ENCODE measurements at regions of chr14 and their contacts with region 1.

Region 1: DNA sequence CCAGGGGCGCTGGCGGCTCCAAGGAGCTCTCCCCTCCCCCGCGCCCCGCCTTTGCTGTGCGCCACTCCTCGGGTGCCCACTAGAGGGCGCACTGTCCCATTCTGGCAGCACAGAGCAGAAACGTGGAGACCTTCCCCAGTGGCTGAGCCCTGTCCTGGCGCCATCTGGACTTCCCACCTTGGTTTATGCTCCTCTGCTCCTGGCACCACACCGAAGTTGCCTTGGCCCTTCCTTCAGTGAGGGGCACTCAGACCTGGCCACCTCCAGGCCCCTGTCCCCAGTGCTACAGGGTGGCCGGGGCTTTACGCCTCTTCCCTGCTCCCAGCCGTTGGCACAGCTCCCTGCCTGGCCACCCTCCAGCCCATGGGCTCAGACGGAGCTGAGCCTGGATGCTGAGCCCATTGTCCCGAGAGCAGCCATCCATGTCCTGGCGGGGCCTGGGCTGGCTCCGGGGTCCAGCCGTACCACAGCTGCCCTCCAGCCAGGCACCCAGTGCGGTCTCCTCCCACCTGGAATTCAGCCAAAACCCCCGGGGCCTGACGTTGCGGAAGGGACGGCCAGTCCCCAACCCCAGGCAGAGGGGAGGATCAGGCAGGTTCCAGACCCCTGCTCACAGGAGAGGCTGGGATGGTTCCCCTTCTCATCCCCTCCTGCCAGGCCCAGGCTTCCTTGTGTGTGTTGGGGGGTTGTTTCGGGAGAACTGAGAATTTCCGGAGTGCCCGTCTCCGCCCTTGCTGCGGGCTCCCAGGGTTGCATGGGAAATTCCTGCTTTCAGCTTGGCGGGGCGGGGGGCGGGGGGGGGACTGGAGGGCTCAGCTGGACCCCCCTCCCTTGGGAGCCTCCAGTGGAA is 5.5 kb upstream of the CRIP1 start:
- DNase-seq: peak; percentile 88
- H3K4me3 Mint-ChIP-seq: peak overlapping the region; percentile 75
- H3K27ac Mint-ChIP-seq: peak overlapping the region; percentile 99
- H3K4me1 Mint-ChIP-seq: peaks cover 24% of the 10 kb centered on the region
- H3K27me3 Mint-ChIP-seq: no peaks in the 10 kb centered on the region
- CTCF ChIP-seq: peak; percentile 98

Region 2: DNA sequence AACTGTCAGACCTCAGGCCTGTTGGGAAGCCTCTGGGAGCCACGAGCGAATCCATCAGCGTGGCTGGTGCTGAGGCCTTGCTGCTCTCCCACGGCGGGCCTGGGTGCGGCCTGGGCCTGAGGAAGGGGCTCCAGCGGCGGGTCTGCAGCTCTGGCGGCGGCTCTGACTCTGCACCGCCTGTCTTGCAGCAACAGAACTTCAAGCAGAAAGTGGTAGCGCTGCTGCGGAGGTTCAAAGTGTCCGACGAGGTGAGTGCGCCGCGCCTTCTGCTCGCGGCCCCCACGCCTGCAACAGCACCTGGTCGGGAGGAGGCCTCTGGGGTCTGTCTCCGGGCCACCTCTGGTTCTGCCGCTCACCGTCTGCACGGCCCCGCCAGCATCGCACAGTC is 111.5 kb before region 1 on chr14:
- CTCF ChIA-PET with region 1: interaction called, 14 read pairs
- POLR2A ChIA-PET with region 1: no interaction called
- intact Hi-C with region 1: no loop called
- DNase-seq: no peak
- H3K4me3 Mint-ChIP-seq: no peak overlapping the region
- H3K27ac Mint-ChIP-seq: no peak overlapping the region
- H3K4me1 Mint-ChIP-seq: no peaks in the 10 kb centered on the region
- H3K27me3 Mint-ChIP-seq: no peaks in the 10 kb centered on the region
- CTCF ChIP-seq: no peak

Region 3: DNA sequence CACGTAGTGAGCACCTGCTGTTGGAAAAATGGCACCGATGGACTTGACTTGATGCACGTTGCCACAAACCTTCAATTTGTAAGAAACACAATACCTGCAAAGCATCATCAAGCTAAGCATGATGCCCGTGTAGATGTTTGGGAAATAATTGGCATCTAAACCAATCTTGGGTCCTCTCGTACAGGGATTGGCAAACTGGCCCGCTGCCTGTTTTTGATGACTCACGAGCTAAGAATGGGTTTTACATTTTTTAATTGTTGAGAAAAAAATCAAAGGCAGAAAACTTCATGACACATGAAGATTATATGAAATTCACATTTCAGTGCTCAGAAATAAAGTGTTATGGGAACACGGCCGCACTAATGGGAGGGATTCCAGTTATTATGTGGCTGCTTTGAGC is 50.6 kb before region 1 on chr14:
- CTCF ChIA-PET with region 1: interaction called, 4 read pairs
- POLR2A ChIA-PET with region 1: interaction called, 4 read pairs
- intact Hi-C with region 1: loop called (anchors 2 kb)
- DNase-seq: peak; percentile 92
- H3K4me3 Mint-ChIP-seq: peak overlapping the region; percentile 21
- H3K27ac Mint-ChIP-seq: peak overlapping the region; percentile 59
- H3K4me1 Mint-ChIP-seq: peaks cover 14% of the 10 kb centered on the region
- H3K27me3 Mint-ChIP-seq: no peaks in the 10 kb centered on the region
- CTCF ChIP-seq: no peak

Region 4: DNA sequence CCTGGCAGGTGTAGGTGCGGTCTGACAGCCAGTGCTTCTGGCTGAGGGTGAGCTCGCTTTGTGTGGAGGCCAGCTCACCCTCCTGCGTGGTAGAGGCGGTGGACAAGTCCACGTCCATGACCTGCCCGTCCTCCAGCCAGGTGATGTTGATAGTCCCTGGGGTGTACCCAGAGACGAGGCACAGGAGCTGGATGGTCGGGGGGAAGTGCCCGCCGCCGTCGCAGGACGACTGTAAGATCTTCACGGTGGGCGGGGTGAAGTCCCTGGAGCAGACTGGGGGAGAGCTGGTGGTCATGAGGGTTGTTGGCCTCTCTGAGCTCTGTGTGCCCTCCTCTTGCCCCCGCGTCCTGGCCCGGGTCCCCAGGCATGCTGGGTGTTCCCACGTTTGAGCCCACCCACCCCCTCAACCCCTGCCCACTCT is 119.8 kb after region 1 on chr14:
- CTCF ChIA-PET with region 1: no interaction called
- POLR2A ChIA-PET with region 1: no interaction called
- intact Hi-C with region 1: no loop called
- DNase-seq: no peak
- H3K4me3 Mint-ChIP-seq: no peak overlapping the region
- H3K27ac Mint-ChIP-seq: no peak overlapping the region
- H3K4me1 Mint-ChIP-seq: no peaks in the 10 kb centered on the region
- H3K27me3 Mint-ChIP-seq: no peaks in the 10 kb centered on the region
- CTCF ChIP-seq: no peak